ENCODE measurements at regions of chr17 and their contacts with region 1.

Region 1: DNA sequence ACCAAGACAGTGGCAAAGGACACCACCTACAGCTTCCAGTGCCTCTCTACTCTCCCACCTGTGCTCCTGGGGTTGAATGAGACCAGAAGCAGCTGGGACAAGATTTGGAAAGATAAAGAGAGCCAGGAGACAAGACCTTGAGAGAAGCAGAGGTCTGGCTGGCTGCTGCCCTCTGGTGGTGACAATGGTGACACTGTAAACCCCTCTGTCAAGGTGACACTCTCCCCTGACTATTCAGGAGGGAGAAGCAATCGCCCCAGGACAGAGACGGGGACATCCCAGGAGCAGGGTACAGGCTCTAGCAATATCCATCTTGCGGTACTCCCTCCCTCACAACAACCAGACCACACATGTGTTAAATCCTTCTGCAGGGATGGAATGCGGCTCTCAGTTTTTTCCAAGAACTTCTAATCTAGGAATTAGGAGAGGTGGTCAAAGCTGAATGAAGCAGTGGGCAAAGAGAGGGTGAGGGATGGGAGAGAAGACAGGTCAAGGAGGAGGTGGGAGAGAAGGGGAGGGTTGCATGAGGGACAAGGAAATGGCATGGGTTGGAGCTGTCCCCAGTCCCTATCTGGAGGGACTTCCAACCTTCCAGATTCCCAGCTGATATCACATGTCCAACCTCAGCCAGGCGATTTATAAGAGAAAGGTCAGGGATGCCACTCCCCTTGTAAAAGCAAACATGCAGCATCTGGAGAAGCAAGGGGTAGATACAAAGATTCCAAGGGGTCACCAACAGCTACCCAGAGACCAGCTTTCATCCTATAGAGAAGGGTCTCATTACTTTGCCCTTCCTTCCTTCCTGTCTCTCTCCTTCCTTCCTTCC is 2.9 kb downstream of the PHOSPHO1 start:
- DNase-seq: peak; percentile 60 to 81
- H3K4me3 ChIP-seq: no peak overlapping the region
- H3K27ac ChIP-seq: no peak overlapping the region
- H3K4me1 ChIP-seq: peaks cover 0 to 37% (median 30%) of the 10 kb centered on the region in 4 donors
- H3K27me3 ChIP-seq: peaks cover 0 to 74% of the 10 kb centered on the region in 2 donors
- CTCF ChIP-seq: peak; percentile 69 to 74

Region 2: DNA sequence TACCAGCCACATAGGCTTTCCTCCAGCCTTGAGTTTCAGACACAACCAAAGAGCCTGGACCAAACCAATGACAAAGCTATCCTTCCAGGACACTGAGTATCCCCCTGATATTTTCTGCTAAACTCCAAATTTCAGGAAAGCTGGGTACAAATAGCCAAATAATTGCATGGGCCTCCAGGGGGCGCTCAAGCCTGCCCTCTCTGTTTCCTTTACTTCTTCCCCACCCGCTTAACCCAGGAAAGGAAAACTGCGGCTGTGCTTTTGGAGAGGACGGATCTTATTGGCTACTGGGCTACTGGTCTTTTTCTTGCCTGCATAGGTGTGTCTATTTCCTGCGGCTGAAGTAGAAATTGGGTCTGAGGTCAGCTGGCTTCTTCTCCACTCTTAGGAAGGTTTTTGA is 47.3 kb before region 1 on chr17:
- intact Hi-C with region 1: loop called (anchors 5 kb)
- DNase-seq: peak; percentile 72 to 74
- H3K4me3 ChIP-seq: no peak overlapping the region
- H3K27ac ChIP-seq: no peak overlapping the region
- H3K4me1 ChIP-seq: no peaks in the 10 kb centered on the region
- H3K27me3 ChIP-seq: peaks cover 0 to 30% of the 10 kb centered on the region in 2 donors
- CTCF ChIP-seq: peak; percentile 64 to 65

Region 3: DNA sequence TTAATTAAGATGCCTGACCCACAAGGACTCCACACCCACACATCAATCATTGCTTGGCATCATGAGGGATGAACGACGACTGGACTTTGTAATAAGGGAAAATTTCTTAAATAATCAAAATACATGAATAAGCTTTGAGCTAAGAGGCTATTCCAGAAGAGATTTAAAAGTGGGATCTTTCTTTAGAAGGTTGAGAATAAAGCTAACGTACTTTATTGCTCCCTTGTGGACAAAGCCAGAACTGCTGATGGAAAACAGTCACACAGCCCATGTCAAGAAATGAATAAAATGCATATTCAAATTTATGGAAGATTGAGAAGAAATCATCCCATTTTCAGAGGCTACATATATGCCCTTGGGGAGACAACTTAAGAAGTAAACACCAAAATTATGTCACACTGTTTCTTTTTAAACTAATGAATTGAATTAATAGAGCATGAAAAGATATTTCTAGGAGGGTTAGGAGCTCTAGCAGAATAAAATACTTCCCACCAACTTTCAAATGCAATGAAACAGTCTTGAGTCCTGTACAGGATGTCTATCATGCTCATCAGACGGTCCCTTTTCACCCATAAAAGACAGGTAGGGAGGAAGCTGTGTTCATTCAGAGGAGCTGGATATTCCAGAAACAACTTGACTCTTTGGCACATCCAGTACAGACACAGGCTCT is 63.2 kb after region 1 on chr17:
- intact Hi-C with region 1: loop called (anchors 5 kb)
- DNase-seq: no peak
- H3K4me3 ChIP-seq: no peak overlapping the region
- H3K27ac ChIP-seq: no peak overlapping the region
- H3K4me1 ChIP-seq: no peaks in the 10 kb centered on the region
- H3K27me3 ChIP-seq: no peaks in the 10 kb centered on the region
- CTCF ChIP-seq: peak; percentile 53 to 62

Region 4: DNA sequence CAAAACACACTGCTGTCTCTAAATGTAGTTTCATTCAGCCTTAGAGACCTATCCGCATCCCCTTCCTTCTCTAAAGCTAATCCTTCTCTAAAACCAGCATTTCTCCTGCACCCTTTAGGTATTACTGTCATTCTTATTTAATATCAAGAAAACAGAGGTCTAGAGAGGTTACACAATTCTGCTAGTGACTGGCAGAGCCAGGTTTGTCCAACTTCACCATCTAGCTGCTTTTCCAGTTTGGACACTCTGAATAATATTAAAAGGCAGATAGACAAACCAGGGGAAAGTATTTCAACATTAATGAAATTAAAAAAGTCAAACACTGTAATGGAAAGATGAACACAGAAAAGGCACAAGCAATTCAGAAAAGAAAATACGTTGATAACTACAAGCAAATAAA is 78.3 kb after region 1 on chr17:
- intact Hi-C with region 1: no loop called
- DNase-seq: no peak
- H3K4me3 ChIP-seq: no peak overlapping the region
- H3K27ac ChIP-seq: no peak overlapping the region
- H3K4me1 ChIP-seq: no peaks in the 10 kb centered on the region
- H3K27me3 ChIP-seq: no peaks in the 10 kb centered on the region
- CTCF ChIP-seq: no peak